Aorta (tissue), 5 donors: ENCODE measurements at regions of chr9 and their contacts with region 1.

Region 1: GRCh38 chr9:130682490-130683121 is 11.0 kb upstream of the EXOSC2 start:
- DNase-seq: peak; percentile 87 to 93
- ATAC-seq: peak; percentile 88
- H3K4me3 ChIP-seq: no peak overlapping the region
- H3K27ac ChIP-seq: no peak overlapping the region
- H3K4me1 ChIP-seq: no peaks in the 10 kb centered on the region
- H3K27me3 ChIP-seq: no peaks in the 10 kb centered on the region

Region 2: DNA sequence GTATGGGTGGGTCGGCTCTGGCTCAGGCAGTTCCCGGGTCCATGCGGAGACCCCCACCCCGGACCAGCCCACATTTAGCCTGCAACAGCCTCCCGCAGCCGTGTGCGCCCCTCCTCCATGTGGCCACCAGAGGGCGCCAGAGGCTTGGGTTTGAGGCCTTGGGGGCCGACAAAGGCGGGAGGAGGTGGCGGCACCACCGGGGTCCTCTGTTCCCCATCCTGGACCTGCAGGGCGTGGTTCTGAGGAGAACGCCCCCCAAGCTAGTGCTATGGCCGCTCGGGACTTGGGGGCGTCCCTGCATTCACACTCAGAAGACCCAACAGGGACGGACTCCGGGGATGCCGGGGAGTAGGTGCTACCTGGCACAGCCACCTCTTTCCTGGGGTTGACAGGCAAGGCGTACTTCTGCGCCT is 221.4 kb before region 1 on chr9:
- intact Hi-C with region 1: loop called (anchors 2 kb)
- DNase-seq: peak; percentile 64 to 91
- ATAC-seq: peak; percentile 64
- H3K4me3 ChIP-seq: no peak overlapping the region
- H3K27ac ChIP-seq: no peak overlapping the region
- H3K4me1 ChIP-seq: no peaks in the 10 kb centered on the region
- H3K27me3 ChIP-seq: no peaks in the 10 kb centered on the region